ENCODE measurements at regions of chr7 and their contacts with region 1.

Region 1: GRCh38 chr7:142760071-142760642 is 10.6 kb upstream of the PRSS2 start:
- DNase-seq: no peak
- ATAC-seq: no peak
- H3K4me3 ChIP-seq: no peak overlapping the region
- H3K27ac ChIP-seq: no peak overlapping the region
- H3K4me1 ChIP-seq: no peaks in the 10 kb centered on the region
- H3K27me3 ChIP-seq: no peaks in the 10 kb centered on the region
- CTCF ChIP-seq: no peak
- POLR2A ChIP-seq: no peak

Region 2: DNA sequence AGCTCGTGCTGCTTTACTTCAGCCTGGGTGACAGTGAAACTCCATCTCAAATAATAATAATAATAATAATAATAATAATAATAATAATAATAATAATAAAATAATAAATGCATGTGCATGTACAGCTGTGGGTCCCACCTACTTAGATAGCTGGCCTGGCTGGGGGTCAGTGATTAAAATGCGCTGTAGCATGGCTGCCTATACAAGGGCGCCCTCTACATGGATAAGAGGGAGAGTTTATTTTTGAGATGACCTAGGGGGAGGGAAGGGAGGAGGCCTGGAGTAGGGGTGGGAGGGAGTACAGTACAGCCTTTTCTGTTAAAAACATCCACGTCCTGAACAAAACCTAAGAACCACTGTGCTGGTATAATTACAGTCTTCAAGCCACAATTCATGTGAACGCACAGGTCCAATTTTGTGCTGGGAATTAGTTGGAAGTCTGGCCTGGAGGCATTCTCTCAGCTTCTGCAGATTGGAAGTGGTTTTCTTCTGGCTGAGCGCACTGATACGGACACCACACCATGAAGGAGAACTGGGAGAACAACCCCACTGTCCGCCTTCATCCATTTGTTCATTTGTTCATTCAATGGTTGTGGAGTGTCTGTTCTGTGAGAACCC is 1539.8 kb before region 1 on chr7:
- intact Hi-C with region 1: loop called in 1 of 10 experiments (anchors 5 kb)
- DNase-seq: no peak
- ATAC-seq: no peak
- H3K4me3 ChIP-seq: no peak overlapping the region
- H3K27ac ChIP-seq: no peak overlapping the region
- H3K4me1 ChIP-seq: no peaks in the 10 kb centered on the region
- H3K27me3 ChIP-seq: no peaks in the 10 kb centered on the region
- CTCF ChIP-seq: peak in 5 of 12 donors; percentile 12 to 34 (median 20)
- POLR2A ChIP-seq: no peak

Region 3: DNA sequence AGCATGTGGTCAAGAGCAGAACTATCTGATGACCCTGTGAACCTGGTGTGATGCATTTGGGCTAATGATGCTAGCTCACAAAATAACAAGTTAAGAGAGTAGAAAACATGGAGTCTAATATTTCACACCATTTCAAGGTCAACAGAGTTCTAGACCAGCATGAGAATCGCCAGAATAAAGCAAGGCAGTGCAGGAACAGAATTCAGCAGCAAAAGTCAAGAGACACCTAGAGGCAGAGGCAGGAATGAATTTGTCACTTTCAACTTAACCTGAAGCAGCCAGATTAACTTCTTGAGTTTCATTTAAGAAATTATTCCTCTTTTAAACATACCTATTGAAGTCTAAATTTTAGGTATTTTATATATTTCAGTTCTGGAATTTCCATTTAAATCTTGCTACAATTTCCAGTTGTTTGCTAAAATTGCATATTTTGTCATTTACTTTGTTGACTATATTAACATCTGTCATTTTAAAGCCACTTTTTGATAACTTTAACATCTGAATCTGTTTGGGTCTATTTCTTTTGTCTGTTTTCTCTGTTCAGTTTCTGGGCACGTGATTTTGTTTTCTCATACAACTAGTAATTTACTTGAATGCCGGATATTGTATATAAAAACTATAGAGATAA is 458.1 kb before region 1 on chr7:
- intact Hi-C with region 1: no loop called
- DNase-seq: no peak
- ATAC-seq: no peak
- H3K4me3 ChIP-seq: no peak overlapping the region
- H3K27ac ChIP-seq: no peak overlapping the region
- H3K4me1 ChIP-seq: no peaks in the 10 kb centered on the region
- H3K27me3 ChIP-seq: peaks cover 0 to 31% (median 0%) of the 10 kb centered on the region in 9 donors
- CTCF ChIP-seq: peak in 5 of 12 donors; percentile 7 to 36 (median 30)
- POLR2A ChIP-seq: no peak

Region 4: GRCh38 chr7:142632291-142633134 is 127.6 kb before region 1 on chr7:
- intact Hi-C with region 1: no loop called
- DNase-seq: peak; percentile 18 to 65 (median 31)
- ATAC-seq: peak; percentile 42 to 73 (median 57)
- H3K4me3 ChIP-seq: no peak overlapping the region
- H3K27ac ChIP-seq: no peak overlapping the region
- H3K4me1 ChIP-seq: no peaks in the 10 kb centered on the region
- H3K27me3 ChIP-seq: peaks cover 0 to 40% (median 2%) of the 10 kb centered on the region in 9 donors
- CTCF ChIP-seq: peak; percentile 64 to 80 (median 74)
- POLR2A ChIP-seq: no peak

Region 5: GRCh38 chr7:142827951-142828500 is 67.9 kb after region 1 on chr7:
- intact Hi-C with region 1: loop called in 1 of 10 experiments (anchors 10 kb)
- DNase-seq: no peak
- ATAC-seq: no peak
- H3K4me3 ChIP-seq: no peak overlapping the region
- H3K27ac ChIP-seq: no peak overlapping the region
- H3K4me1 ChIP-seq: no peaks in the 10 kb centered on the region
- H3K27me3 ChIP-seq: peaks cover 0 to 14% (median 0%) of the 10 kb centered on the region in 9 donors
- CTCF ChIP-seq: no peak
- POLR2A ChIP-seq: no peak

Region 6: DNA sequence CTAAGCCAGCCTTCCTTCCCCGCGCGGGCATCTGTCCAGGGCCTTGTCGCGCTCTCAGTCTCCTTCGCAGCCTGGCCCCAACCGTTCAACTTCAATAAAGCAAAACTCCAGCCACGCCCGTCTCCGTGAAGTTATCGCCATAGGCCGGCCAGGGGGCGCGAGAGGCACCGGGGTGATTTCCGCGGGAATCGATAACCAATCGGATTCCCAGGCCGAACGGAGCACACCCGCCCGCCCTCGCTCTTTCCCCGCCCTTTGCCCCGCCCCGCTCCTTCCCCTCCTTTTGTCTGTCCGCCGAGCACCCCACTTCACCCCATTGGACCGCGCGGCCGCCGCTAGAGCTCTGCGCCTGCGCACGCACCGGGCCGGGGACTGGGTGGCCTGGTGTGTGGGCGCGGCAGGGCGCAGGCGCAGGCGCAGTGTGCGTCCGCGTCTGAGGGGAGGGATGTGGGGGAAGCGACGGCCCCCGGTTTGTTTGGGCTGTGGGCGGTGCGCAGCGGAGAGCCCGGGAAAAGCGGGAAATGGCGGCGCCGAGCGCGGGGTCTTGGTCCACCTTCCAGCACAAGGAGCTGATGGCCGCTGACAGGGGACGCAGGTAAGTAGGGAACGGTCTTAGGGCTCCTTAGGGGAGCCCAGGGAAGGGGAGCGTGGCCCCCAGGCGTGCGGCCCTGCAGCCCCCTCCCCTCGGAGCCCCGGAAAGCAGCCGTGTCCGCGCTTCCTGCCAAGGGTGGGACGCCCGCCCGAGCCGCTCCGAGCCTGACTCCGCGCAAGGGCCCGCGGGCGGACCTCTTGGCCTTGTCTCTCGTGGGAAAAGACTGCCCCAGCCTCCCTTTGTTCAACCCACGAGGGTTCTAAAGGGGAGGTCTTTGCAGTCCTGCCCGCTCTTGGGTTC is 528.0 kb after region 1 on chr7 and contains the start of gene CASP2:
- intact Hi-C with region 1: no loop called
- DNase-seq: peak; percentile 99
- ATAC-seq: peak; percentile 96 to 98 (median 97)
- H3K4me3 ChIP-seq: peak within 1 kb of the TSS; percentile 60 to 99 (median 86)
- H3K27ac ChIP-seq: peak within 1 kb of the TSS; percentile 76 to 97 (median 93)
- H3K4me1 ChIP-seq: peaks cover 0 to 60% (median 41%) of the 10 kb centered on the region in 12 donors
- H3K27me3 ChIP-seq: no peaks in the 10 kb centered on the region
- CTCF ChIP-seq: peak in 11 of 12 donors; percentile 13 to 66 (median 46)
- POLR2A ChIP-seq: peak in 1 of 2 donors; percentile 70
- total RNA-seq, gene CASP2: 7.4 to 18.3 (median 13.8) TPM

Measured in heart left ventricle (tissue), 16 donors.